Lower leg skin (tissue), 4 donors: ENCODE measurements at regions of chr6 and their contacts with region 1.

Region 1: GRCh38 chr6:71897276-71897675 is 10.9 kb downstream of the RIMS1 start:
- DNase-seq: no peak
- H3K4me3 ChIP-seq: no peak overlapping the region
- CTCF ChIP-seq: no peak
- POLR2A ChIP-seq: no peak

Region 2: DNA sequence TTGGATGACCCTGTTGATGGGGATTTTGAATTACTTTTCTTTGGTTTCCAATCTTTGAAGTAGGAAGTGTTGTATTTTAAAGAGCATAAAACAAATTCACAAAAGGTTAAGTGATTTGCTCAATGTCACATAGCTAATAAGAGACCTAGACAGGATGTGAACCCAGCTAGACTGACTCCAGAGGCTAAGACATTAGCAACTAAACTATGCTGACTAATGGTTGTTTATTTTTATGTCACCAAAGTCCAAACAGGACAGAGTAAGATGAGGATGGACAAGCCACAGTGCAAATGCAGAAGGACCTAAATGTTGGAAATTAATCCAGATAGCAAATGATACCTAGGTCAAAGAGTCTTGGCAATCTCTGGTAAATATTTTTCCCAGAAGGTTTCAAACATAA is 570.7 kb before region 1 on chr6:
- intact Hi-C with region 1: loop called (anchors 5 kb)
- DNase-seq: no peak
- H3K4me3 ChIP-seq: no peak overlapping the region
- CTCF ChIP-seq: no peak
- POLR2A ChIP-seq: no peak